Gastrocnemius medialis (tissue), 4 donors: ENCODE measurements at regions of chr16 and their contacts with region 1.

Region 1: DNA sequence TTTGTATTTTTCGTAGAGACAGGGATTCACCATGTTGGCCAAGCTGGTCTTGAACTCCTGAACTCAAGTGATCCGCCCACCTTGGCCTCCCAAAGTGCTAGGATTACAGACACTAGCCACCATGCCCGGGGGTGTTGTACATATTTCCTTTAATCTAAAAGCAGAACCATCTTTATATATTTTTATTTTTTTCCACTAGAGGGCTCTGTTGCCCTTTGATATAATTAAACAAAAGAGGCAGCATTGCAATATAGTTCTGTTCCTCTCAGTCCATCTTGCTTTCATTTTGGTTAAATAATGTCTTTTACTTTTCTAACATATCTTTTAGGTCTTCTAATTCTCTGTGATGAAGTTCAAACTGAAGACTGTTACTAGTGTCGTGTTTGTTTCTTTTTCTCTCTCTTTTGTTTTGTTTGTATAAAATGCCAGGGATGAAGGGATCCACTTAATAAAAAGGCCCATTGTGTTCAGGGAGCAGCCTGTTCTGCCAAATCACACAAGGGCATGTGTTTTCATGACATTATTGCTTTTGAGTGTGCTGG is 23.4 kb downstream of the WWOX start:
- DNase-seq: no peak
- ATAC-seq: peak; percentile 69 to 80
- H3K4me3 ChIP-seq: no peak overlapping the region
- H3K27ac ChIP-seq: no peak overlapping the region
- H3K4me1 ChIP-seq: peaks cover 14 to 16% of the 10 kb centered on the region in 2 donors
- H3K27me3 ChIP-seq: no peaks in the 10 kb centered on the region
- CTCF ChIP-seq: peak in 4 of 5 experiments; percentile 43 to 52 (median 50)
- POLR2A ChIP-seq: no peak

Region 2: GRCh38 chr16:78235168-78235800 is 112.4 kb after region 1 on chr16:
- in situ Hi-C with region 1: loop called (anchors 5 to 10 kb)
- intact Hi-C with region 1: loop called (anchors 1 kb)
- DNase-seq: peak in 1 of 2 donors; percentile 40
- ATAC-seq: peak in 1 of 2 donors; percentile 56
- H3K4me3 ChIP-seq: no peak overlapping the region
- H3K27ac ChIP-seq: no peak overlapping the region
- H3K4me1 ChIP-seq: no peaks in the 10 kb centered on the region
- H3K27me3 ChIP-seq: no peaks in the 10 kb centered on the region
- CTCF ChIP-seq: peak; percentile 46 to 76 (median 66)
- POLR2A ChIP-seq: no peak

Region 3: DNA sequence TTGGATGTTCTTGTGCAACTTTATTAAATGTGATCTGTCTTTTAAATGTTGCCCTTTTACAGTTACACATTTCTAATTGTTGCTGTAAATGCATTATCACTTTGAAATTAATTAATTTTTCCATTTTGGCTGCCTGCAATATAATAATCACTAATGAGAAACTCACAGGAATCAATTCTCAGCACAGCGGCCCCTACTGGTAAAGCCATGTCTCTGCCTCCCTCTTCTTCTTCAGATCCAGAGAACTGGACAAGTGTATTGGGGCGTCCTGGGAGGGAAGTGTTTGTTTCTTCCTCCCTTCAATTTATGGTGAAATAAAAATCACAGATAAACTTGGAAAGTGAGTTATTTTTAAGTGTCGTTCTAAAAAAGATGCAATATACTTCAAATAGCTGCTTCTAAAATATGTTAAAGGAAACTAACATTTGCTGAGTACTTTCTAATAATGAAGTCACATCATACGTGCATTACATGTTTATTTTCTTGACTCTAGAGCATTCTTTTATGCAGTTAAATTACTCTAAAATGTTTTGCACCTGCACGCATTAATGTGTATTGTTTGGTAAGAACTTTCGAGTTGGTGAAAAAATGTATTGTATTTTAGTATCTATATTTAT is 314.6 kb after region 1 on chr16:
- in situ Hi-C with region 1: loop called in 1 of 4 experiments (anchors 25 kb)
- intact Hi-C with region 1: no loop called
- DNase-seq: peak in 1 of 2 donors; percentile 6
- ATAC-seq: no peak
- H3K4me3 ChIP-seq: no peak overlapping the region
- H3K27ac ChIP-seq: no peak overlapping the region
- H3K4me1 ChIP-seq: no peaks in the 10 kb centered on the region
- H3K27me3 ChIP-seq: no peaks in the 10 kb centered on the region
- CTCF ChIP-seq: peak; percentile 37 to 74 (median 46)
- POLR2A ChIP-seq: no peak

Region 4: GRCh38 chr16:80084685-80085084 is 1961.8 kb after region 1 on chr16:
- in situ Hi-C with region 1: no loop called
- intact Hi-C with region 1: loop called (anchors 10 kb)
- DNase-seq: peak; percentile 8 to 19
- ATAC-seq: peak in 1 of 2 donors; percentile 75
- H3K4me3 ChIP-seq: no peak overlapping the region
- H3K27ac ChIP-seq: no peak overlapping the region
- H3K4me1 ChIP-seq: no peaks in the 10 kb centered on the region
- H3K27me3 ChIP-seq: no peaks in the 10 kb centered on the region
- CTCF ChIP-seq: peak in 4 of 5 experiments; percentile 13 to 49 (median 38)
- POLR2A ChIP-seq: no peak